Posterior vena cava (tissue), 2 donors: ENCODE measurements at regions of chr12 and their contacts with region 1.

Region 1: DNA sequence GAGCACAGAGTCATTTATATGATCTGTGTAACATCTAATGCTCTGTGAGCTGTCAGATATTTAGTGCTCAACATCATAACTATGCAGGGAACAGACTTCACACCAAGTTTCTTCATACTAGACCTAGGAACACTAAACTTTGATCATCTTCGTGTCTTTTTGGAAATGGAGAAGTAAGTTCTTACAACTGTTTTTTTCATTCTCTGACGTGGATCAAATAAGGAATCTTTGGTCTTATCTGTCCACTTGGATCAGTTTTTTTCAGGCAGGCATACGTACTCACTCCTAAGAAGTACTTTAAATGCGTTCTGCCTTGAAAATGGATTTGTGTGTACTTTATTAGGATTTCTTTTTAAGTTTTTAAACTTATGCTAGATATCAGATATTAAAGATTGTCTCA is 191.0 kb downstream of the FBXL14 start:
- DNase-seq: no peak

Region 2: GRCh38 chr12:1443421-1444141 is 40.2 kb after region 1 on chr12:
- intact Hi-C with region 1: no loop called
- DNase-seq: no peak

Region 3: DNA sequence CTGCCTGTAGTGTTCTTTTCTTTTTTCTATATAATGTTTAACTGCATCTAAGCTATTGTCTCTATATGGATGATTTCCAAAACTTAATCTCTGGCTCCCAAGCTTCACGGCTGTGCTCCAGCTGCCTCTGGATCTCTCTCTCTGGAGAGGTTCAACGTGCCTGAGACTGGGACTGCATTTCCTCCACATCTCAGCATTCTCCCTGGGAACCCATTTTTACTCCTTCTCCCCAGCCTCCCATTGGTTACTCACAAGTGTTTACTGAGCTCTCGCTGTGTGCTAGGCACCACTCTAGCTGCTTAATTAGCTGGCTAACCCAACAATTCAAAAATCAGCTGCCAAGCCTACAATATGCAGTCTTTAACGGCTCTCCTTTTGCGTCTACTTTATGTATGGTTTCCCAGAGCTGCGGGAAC is 156.3 kb after region 1 on chr12:
- intact Hi-C with region 1: loop called in 1 of 2 experiments (anchors 10 kb)
- DNase-seq: no peak